OCI-LY7 (cell line): ENCODE measurements at regions of chr17 and their contacts with region 1.

Region 1: GRCh38 chr17:44591206-44591605 is 33.9 kb downstream of the FZD2 start:
- DNase-seq: no peak
- H3K4me3 ChIP-seq: no peak overlapping the region
- H3K27ac ChIP-seq: no peak overlapping the region
- H3K4me1 ChIP-seq: no peaks in the 10 kb centered on the region
- CTCF ChIP-seq: no peak

Region 2: GRCh38 chr17:43680461-43680860 is 910.7 kb before region 1 on chr17:
- CTCF ChIA-PET with region 1: no interaction called
- POLR2A ChIA-PET with region 1: interaction called, 10 read pairs
- intact Hi-C with region 1: no loop called
- DNase-seq: no peak
- H3K4me3 ChIP-seq: no peak overlapping the region
- H3K27ac ChIP-seq: no peak overlapping the region
- H3K4me1 ChIP-seq: peaks cover 15% of the 10 kb centered on the region
- CTCF ChIP-seq: no peak

Region 3: DNA sequence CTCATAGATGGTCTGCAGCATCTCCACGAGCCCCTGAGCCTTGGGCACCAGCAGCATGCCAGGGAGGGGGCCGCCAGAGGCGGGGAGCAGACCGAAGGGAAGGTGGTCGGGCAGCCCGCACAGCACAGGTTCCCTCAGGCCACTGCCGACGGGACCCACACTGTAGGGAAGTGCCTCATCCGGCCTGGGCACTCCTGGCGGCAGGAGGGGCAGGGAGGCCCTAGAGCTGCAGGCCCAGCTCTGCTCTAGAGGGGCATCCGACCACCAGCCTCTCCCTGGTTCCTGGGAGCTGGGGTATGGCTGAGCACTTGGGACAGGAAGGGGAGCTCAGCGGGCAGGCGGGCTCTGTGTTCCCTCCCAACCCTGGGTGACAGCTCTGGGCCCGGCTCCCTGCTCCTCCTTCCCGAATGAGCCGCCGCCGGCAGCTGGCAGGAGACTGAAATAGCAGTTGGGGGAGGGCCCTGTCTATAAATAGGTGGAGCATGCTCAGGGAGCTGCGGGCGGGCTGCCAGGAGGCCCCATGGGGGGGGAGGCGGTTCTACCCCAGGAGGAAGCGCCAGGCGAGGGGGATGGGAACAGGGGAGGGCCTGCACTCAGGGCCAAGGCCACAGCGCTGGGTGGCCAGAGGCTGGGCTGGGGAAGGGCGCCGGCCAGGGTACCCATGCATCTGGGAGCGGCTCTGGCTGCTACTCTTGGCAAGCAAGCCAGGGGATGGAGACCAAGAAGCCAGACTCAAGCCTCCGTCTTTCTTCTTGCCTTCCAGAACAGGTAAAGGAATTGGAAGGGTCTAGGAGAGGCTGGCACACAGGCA is 480.2 kb before region 1 on chr17:
- CTCF ChIA-PET with region 1: no interaction called
- POLR2A ChIA-PET with region 1: no interaction called
- intact Hi-C with region 1: no loop called
- DNase-seq: peak; percentile 62
- H3K4me3 ChIP-seq: peak overlapping the region; percentile 52
- H3K27ac ChIP-seq: peak overlapping the region; percentile 30
- H3K4me1 ChIP-seq: peaks cover 32% of the 10 kb centered on the region
- CTCF ChIP-seq: no peak

Region 4: GRCh38 chr17:44496815-44497214 is 94.4 kb before region 1 on chr17:
- CTCF ChIA-PET with region 1: no interaction called
- POLR2A ChIA-PET with region 1: no interaction called
- intact Hi-C with region 1: no loop called
- DNase-seq: no peak
- H3K4me3 ChIP-seq: no peak overlapping the region
- H3K27ac ChIP-seq: no peak overlapping the region
- H3K4me1 ChIP-seq: peaks cover 34% of the 10 kb centered on the region
- CTCF ChIP-seq: no peak

Region 5: DNA sequence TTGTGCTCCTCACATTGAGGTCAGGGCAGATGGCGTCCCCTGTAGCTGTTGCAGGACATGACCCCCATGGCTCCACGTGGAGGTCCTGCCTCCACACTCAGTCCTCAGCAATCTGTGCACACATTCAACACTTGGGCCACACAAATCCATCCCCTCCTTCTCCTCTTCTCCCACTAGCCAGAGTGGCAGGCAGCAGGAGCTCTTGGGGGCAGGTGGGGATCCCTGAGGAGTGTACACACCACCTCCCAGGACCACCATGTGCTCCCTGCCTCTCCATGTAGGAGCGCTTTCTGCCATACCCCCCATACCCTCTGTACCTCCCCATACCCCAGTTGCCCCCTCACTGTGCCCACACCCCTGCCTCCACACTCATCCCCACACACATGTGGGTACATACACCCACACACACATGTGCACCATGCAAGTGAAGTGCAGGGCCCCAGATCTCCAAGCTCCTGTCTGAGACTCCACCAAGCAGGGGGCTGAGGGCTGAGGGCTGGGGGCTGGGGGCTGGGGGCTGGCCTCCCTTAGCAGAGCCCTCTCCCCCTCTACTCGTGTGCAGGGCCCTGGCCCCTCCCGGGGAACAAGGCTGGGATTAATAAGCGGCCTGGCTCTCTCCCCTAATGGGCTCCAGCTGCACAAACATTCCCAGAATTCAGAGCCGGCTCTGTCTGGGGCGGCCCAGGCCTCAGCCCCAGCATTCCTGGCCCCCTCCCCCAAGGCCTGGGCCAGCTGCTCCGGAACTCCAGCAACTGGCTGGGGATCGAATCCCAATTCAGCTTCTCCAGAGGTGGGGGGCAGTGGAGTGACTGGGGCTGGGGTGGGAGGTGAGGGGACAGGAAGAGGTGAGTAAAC is 16.9 kb after region 1 on chr17:
- CTCF ChIA-PET with region 1: no interaction called
- POLR2A ChIA-PET with region 1: no interaction called
- intact Hi-C with region 1: no loop called
- DNase-seq: no peak
- H3K4me3 ChIP-seq: no peak overlapping the region
- H3K27ac ChIP-seq: no peak overlapping the region
- H3K4me1 ChIP-seq: no peaks in the 10 kb centered on the region
- CTCF ChIP-seq: no peak